ENCODE measurements at regions of chr17 and their contacts with region 1.

Region 1: GRCh38 chr17:75904749-75905521 is at the start of gene MRPL38:
- DNase-seq: peak; percentile 97 to 99
- H3K4me3 ChIP-seq: peak within 1 kb of the TSS; percentile 66
- H3K4me3 Mint-ChIP-seq: peak within 1 kb of the TSS; percentile 99
- H3K27ac Mint-ChIP-seq: peak within 1 kb of the TSS; percentile 92
- H3K4me1 ChIP-seq: peaks cover 22% of the 10 kb centered on the region
- H3K4me1 Mint-ChIP-seq: peaks cover 17% of the 10 kb centered on the region
- H3K27me3 ChIP-seq: no peaks in the 10 kb centered on the region
- H3K27me3 Mint-ChIP-seq: no peaks in the 10 kb centered on the region
- CTCF ChIP-seq: peak; percentile 95
- total RNA-seq, gene MRPL38: 157 and 163 TPM in 2 replicates

Region 2: DNA sequence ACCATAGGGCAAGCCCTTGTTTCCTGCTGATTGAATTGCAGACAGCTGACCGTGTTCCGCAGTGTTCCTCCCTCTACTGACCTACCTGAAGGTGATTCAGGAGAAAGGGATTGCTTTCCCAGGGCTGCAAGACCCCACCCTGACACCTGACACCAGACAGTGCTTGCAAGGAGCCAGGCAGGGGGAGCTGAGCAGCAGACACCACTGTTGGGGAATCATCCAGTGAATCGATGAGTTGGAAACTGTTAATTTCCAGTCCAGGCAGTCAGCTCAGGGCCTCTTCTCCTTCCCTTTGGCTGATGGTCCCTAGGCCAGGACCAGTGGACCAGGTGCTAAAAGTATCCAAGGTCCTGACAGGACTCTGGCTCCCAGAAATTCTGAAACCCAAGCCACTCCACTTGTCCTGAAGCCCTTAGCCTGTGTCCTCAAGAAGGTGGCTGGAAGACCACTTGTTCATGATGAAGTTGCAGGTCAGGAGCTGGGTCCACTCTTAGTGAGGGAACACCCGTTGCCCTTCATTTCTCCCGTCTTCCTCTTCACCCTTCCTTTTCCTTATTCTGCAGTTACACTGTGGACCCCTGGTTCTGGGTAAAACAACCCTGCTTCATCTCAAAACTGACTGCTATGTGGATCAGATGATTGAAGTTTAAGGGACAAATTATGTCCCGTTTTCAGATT is 129.8 kb before region 1 on chr17:
- CTCF ChIA-PET with region 1: no interaction called
- POLR2A ChIA-PET with region 1: no interaction called
- intact Hi-C with region 1: no loop called
- DNase-seq: peak in 1 of 2 experiments; percentile 64
- H3K4me3 ChIP-seq: no peak overlapping the region
- H3K4me3 Mint-ChIP-seq: peak overlapping the region; percentile 32
- H3K27ac Mint-ChIP-seq: peak overlapping the region; percentile 74
- H3K4me1 ChIP-seq: peaks cover 13% of the 10 kb centered on the region
- H3K4me1 Mint-ChIP-seq: peaks cover 30% of the 10 kb centered on the region
- H3K27me3 ChIP-seq: no peaks in the 10 kb centered on the region
- H3K27me3 Mint-ChIP-seq: peaks cover 4% of the 10 kb centered on the region
- CTCF ChIP-seq: no peak

Region 3: GRCh38 chr17:75920045-75920560 is 15.2 kb after region 1 on chr17:
- CTCF ChIA-PET with region 1: interaction called, 11 read pairs
- POLR2A ChIA-PET with region 1: interaction called, 9 read pairs
- intact Hi-C with region 1: no loop called
- DNase-seq: no peak
- H3K4me3 ChIP-seq: no peak overlapping the region
- H3K4me3 Mint-ChIP-seq: no peak overlapping the region
- H3K27ac Mint-ChIP-seq: no peak overlapping the region
- H3K4me1 ChIP-seq: no peaks in the 10 kb centered on the region
- H3K4me1 Mint-ChIP-seq: peaks cover 6% of the 10 kb centered on the region
- H3K27me3 ChIP-seq: no peaks in the 10 kb centered on the region
- H3K27me3 Mint-ChIP-seq: no peaks in the 10 kb centered on the region
- CTCF ChIP-seq: no peak

Region 4: GRCh38 chr17:75940724-75941441 is 35.9 kb after region 1 on chr17 and contains the start of gene FBF1:
- CTCF ChIA-PET with region 1: interaction called, 8 read pairs
- POLR2A ChIA-PET with region 1: interaction called, 15 read pairs
- intact Hi-C with region 1: loop called (anchors 1 kb)
- DNase-seq: peak; percentile 97 to 98
- H3K4me3 ChIP-seq: peak within 1 kb of the TSS; percentile 65
- H3K4me3 Mint-ChIP-seq: peak within 1 kb of the TSS; percentile 79
- H3K27ac Mint-ChIP-seq: peak within 1 kb of the TSS; percentile 79
- H3K4me1 ChIP-seq: no peaks in the 10 kb centered on the region
- H3K4me1 Mint-ChIP-seq: no peaks in the 10 kb centered on the region
- H3K27me3 ChIP-seq: no peaks in the 10 kb centered on the region
- H3K27me3 Mint-ChIP-seq: no peaks in the 10 kb centered on the region
- CTCF ChIP-seq: no peak
- total RNA-seq, gene FBF1: 13.9 and 14.1 TPM in 2 replicates

Region 5: GRCh38 chr17:75978938-75979704 is 74.2 kb after region 1 on chr17 and contains the starts of genes ACOX1 and TEN1:
- CTCF ChIA-PET with region 1: interaction called, 5 read pairs
- POLR2A ChIA-PET with region 1: no interaction called
- intact Hi-C with region 1: loop called (anchors 1 kb)
- DNase-seq: peak; percentile 99
- H3K4me3 ChIP-seq: peak within 1 kb of the TSS; percentile 88
- H3K4me3 Mint-ChIP-seq: peak within 1 kb of the TSS; percentile 97
- H3K27ac Mint-ChIP-seq: peak within 1 kb of the TSS; percentile 100
- H3K4me1 ChIP-seq: peaks cover 59% of the 10 kb centered on the region
- H3K4me1 Mint-ChIP-seq: peaks cover 49% of the 10 kb centered on the region
- H3K27me3 ChIP-seq: no peaks in the 10 kb centered on the region
- H3K27me3 Mint-ChIP-seq: no peaks in the 10 kb centered on the region
- CTCF ChIP-seq: peak; percentile 24 to 30
- total RNA-seq, gene ACOX1: 43.7 and 48.3 TPM in 2 replicates
- total RNA-seq, gene TEN1: 19.1 and 20.3 TPM in 2 replicates

Region 6: GRCh38 chr17:76000016-76000754 is 95.2 kb after region 1 on chr17:
- CTCF ChIA-PET with region 1: interaction called, 19 read pairs
- POLR2A ChIA-PET with region 1: interaction called, 8 read pairs
- intact Hi-C with region 1: loop called (anchors 1 kb)
- DNase-seq: peak; percentile 65 to 81
- H3K4me3 ChIP-seq: no peak overlapping the region
- H3K4me3 Mint-ChIP-seq: no peak overlapping the region
- H3K27ac Mint-ChIP-seq: no peak overlapping the region
- H3K4me1 ChIP-seq: peaks cover 54% of the 10 kb centered on the region
- H3K4me1 Mint-ChIP-seq: peaks cover 25% of the 10 kb centered on the region
- H3K27me3 ChIP-seq: no peaks in the 10 kb centered on the region
- H3K27me3 Mint-ChIP-seq: no peaks in the 10 kb centered on the region
- CTCF ChIP-seq: peak; percentile 86 to 95

Region 7: DNA sequence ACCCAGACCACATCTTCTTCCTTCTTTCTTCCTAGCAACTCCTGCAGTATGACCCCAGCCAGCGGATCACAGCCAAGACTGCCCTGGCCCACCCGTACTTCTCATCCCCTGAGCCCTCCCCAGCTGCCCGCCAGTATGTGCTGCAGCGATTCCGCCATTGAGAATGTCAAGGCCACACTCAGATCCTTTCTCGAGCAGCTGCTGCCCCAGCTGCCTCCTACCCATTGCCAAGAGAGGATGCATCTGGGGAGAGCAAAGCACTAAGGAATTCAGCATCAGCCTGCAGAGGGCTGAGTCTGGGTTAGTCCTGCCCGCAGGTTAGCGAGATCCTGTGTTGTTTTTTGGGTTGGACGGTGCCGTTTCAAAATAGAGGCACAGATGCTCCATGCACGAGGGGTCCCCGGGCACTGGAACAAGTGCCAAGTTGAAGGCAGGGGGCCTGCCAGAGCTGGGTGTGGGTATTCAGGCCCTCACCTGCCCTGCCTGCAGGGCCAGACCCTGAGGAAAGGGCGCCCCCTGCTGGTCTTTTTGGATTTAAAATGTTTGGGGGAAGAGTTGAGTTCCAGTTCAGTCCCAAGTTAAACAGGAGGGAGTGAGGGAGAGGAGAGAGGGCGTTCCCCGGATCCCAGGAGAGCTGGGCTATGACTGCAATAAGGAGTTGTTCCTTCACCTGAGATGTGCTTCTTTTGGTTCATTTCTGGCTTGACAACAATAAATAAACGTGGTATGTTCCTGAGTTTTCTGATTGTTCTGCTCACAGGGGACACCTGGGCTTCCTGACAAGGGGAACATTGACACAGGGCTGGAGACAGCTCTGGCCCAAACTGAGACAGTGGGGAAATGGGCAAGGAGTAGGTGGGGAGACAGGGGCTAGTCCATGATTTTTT is 100.6 kb after region 1 on chr17:
- CTCF ChIA-PET with region 1: interaction called, 19 read pairs
- POLR2A ChIA-PET with region 1: interaction called, 19 read pairs
- intact Hi-C with region 1: loop called (anchors 1 kb)
- DNase-seq: peak; percentile 85 to 93
- H3K4me3 ChIP-seq: no peak overlapping the region
- H3K4me3 Mint-ChIP-seq: no peak overlapping the region
- H3K27ac Mint-ChIP-seq: peak overlapping the region; percentile 30
- H3K4me1 ChIP-seq: peaks cover 10% of the 10 kb centered on the region
- H3K4me1 Mint-ChIP-seq: peaks cover 10% of the 10 kb centered on the region
- H3K27me3 ChIP-seq: no peaks in the 10 kb centered on the region
- H3K27me3 Mint-ChIP-seq: no peaks in the 10 kb centered on the region
- CTCF ChIP-seq: peak; percentile 68 to 92

Measured in Caco-2 (cell line).